Activated naive CD4-positive, alpha-beta T cell treated with anti-CD3 and anti-CD28 coated beads, Interleukin-2, amount 10 ng/mL, durations not matched to agents 7 days and 5 days (primary cell): ENCODE measurements at regions of chr13 and their contacts with region 1.

Region 1: GRCh38 chr13:75870397-75870903 is 234.3 kb downstream of the LMO7 start:
- DNase-seq: peak; percentile 22
- H3K4me3 Mint-ChIP-seq: peak overlapping the region; percentile 61
- H3K27ac Mint-ChIP-seq: peak overlapping the region; percentile 93
- H3K4me1 Mint-ChIP-seq: peaks cover 36% of the 10 kb centered on the region
- H3K27me3 Mint-ChIP-seq: peaks cover 15% of the 10 kb centered on the region

Region 2: DNA sequence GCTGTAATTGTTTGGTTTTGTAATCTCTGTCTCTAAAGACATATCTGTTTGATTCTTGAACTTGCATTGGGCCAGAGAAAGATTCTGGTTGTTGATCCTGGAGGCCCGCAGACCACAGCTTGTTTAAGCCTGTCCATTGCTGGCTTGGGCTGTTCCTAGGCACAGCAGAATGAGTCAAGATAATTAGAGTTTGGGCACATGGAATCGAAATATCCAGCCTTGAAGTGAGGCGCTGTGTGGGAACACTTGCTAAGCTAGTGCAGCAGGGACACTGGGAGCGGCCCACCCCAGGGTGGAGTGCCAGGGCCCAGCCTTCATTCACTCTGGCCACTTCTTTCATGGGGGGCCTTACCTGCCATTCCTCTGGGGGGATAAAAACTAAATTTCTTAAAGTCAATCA is 14.6 kb before region 1 on chr13:
- CTCF ChIA-PET with region 1: interaction called, 12 read pairs
- DNase-seq: no peak
- H3K4me3 Mint-ChIP-seq: no peak overlapping the region
- H3K27ac Mint-ChIP-seq: no peak overlapping the region
- H3K4me1 Mint-ChIP-seq: no peaks in the 10 kb centered on the region
- H3K27me3 Mint-ChIP-seq: no peaks in the 10 kb centered on the region